Heart left ventricle (tissue), 16 donors: ENCODE measurements at regions of chr3 and their contacts with region 1.

Region 1: GRCh38 chr3:29775340-29775739 is 494.5 kb downstream of the RBMS3 start:
- DNase-seq: no peak
- ATAC-seq: peak in 1 of 4 donors; percentile 18
- H3K4me3 ChIP-seq: no peak overlapping the region
- H3K27ac ChIP-seq: no peak overlapping the region
- H3K4me1 ChIP-seq: peaks cover 0 to 11% (median 0%) of the 10 kb centered on the region in 12 donors
- H3K27me3 ChIP-seq: no peaks in the 10 kb centered on the region
- CTCF ChIP-seq: no peak
- POLR2A ChIP-seq: no peak

Region 2: GRCh38 chr3:28916713-28917499 is 858.4 kb before region 1 on chr3:
- intact Hi-C with region 1: loop called in 1 of 10 experiments (anchors 10 kb)
- DNase-seq: peak in 4 of 5 donors; percentile 65 to 82 (median 70)
- ATAC-seq: peak; percentile 85 to 98 (median 96)
- H3K4me3 ChIP-seq: peak overlapping the region in 9 of 12 donors; percentile 23 to 49 (median 39)
- H3K27ac ChIP-seq: peak overlapping the region; percentile 32 to 73 (median 53)
- H3K4me1 ChIP-seq: peaks cover 0 to 26% (median 10%) of the 10 kb centered on the region in 12 donors
- H3K27me3 ChIP-seq: no peaks in the 10 kb centered on the region
- CTCF ChIP-seq: peak; percentile 47 to 77 (median 67)
- POLR2A ChIP-seq: no peak

Region 3: GRCh38 chr3:29503958-29504357 is 271.4 kb before region 1 on chr3:
- intact Hi-C with region 1: no loop called
- DNase-seq: peak in 4 of 5 donors; percentile 31 to 45 (median 38)
- ATAC-seq: peak; percentile 80 to 99 (median 96)
- H3K4me3 ChIP-seq: no peak overlapping the region
- H3K27ac ChIP-seq: peak overlapping the region in 11 of 12 donors; percentile 16 to 73 (median 52)
- H3K4me1 ChIP-seq: peaks cover 0 to 30% (median 11%) of the 10 kb centered on the region in 12 donors
- H3K27me3 ChIP-seq: no peaks in the 10 kb centered on the region
- CTCF ChIP-seq: no peak
- POLR2A ChIP-seq: no peak

Region 4: GRCh38 chr3:29850641-29851040 is 75.3 kb after region 1 on chr3:
- intact Hi-C with region 1: loop called in 1 of 10 experiments (anchors 5 kb)
- DNase-seq: no peak
- ATAC-seq: no peak
- H3K4me3 ChIP-seq: no peak overlapping the region
- H3K27ac ChIP-seq: no peak overlapping the region
- H3K4me1 ChIP-seq: peaks cover 0 to 16% (median 2%) of the 10 kb centered on the region in 12 donors
- H3K27me3 ChIP-seq: no peaks in the 10 kb centered on the region
- CTCF ChIP-seq: no peak
- POLR2A ChIP-seq: no peak